ENCODE measurements at regions of chr18 and their contacts with region 1.

Region 1: DNA sequence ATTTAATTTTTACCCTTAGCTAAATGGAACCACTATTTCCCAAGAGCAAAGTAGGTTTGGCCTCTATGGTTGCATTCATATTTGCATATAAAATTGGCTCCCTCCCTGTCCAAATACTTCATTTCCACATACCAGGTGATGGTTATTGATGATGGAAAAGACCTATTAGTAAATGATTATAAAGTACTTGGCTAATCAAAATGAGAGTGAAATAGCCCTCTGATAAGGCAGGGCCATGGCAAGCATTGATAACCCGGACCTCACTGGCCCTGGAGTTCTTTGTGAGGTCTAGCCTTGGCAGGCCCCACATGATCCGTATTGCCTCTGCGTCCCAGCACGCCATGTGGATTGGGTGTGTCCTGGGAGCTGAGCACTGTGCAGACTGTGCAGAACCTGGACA is 201.1 kb upstream of the GATA6 start:
- DNase-seq: no peak
- CTCF ChIP-seq: no peak

Region 2: GRCh38 chr18:21815101-21815500 is 153.2 kb before region 1 on chr18:
- CTCF ChIA-PET with region 1: no interaction called
- POLR2A ChIA-PET with region 1: no interaction called
- DNase-seq: no peak
- CTCF ChIP-seq: no peak

Region 3: DNA sequence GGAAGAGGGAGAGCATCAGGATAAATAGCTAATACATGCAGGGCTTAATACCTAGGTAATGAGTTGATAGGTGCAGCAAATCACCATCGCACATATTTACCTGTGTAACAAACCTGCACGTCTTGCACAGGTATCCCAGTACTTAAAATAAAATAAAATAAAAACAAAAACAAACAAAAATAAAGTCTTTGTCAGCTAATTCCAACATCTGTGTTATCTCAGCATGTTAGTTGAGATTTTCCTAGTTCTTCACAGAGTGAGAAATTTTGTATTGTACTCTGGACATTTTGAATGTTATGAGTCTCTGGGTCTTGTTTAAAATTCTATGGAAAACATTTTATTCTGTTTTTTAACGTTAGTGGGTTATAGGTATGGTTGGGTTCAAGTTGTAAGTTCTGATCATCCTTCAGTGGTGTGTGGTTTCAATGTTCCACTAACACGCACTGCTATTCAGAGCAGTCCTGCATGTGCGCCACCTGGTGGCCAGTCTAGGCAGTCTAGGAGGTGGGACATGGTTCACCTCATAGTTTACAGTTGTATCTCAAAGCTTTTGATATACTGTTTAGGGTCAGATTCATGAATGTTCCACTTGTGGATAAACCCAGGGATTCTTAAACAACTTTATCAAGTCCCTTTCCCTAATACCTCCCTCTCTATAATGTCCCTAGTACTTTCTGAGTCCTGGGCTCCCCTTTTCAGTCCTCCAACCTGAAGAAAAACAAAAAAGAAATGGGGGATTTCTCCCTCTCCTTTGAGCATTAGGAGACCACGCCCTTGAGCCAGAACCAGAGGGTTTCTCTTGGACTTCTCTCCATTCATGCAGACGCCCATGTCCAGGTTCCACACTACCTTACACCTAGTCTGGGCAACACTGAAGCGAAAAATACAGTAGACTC is 12.3 kb before region 1 on chr18:
- CTCF ChIA-PET with region 1: interaction called, 11 read pairs
- POLR2A ChIA-PET with region 1: no interaction called
- DNase-seq: peak; percentile 70
- CTCF ChIP-seq: peak; percentile 93

Region 4: GRCh38 chr18:22015156-22015555 is 46.8 kb after region 1 on chr18:
- CTCF ChIA-PET with region 1: no interaction called
- POLR2A ChIA-PET with region 1: no interaction called
- DNase-seq: no peak
- CTCF ChIP-seq: no peak